Caco-2 (cell line): ENCODE measurements at regions of chr3 and their contacts with region 1.

Region 1: GRCh38 chr3:98573181-98573728 is 20.2 kb downstream of the CPOX start:
- DNase-seq: peak in 1 of 2 experiments; percentile 19
- H3K4me3 ChIP-seq: no peak overlapping the region
- H3K4me3 Mint-ChIP-seq: no peak overlapping the region
- H3K27ac Mint-ChIP-seq: no peak overlapping the region
- H3K4me1 ChIP-seq: no peaks in the 10 kb centered on the region
- H3K4me1 Mint-ChIP-seq: peaks cover 12% of the 10 kb centered on the region
- H3K27me3 ChIP-seq: no peaks in the 10 kb centered on the region
- H3K27me3 Mint-ChIP-seq: no peaks in the 10 kb centered on the region
- CTCF ChIP-seq: peak; percentile 43 to 58

Region 2: GRCh38 chr3:98039322-98040024 is 533.8 kb before region 1 on chr3:
- CTCF ChIA-PET with region 1: no interaction called
- POLR2A ChIA-PET with region 1: no interaction called
- intact Hi-C with region 1: loop called (anchors 1 kb)
- DNase-seq: peak; percentile 53 to 70
- H3K4me3 ChIP-seq: 0 out of 2 replicates have a peak overlapping the region, but pooled peaks have one; percentile 20
- H3K4me3 Mint-ChIP-seq: peak overlapping the region; percentile 72
- H3K27ac Mint-ChIP-seq: no peak overlapping the region
- H3K4me1 ChIP-seq: no peaks in the 10 kb centered on the region
- H3K4me1 Mint-ChIP-seq: no peaks in the 10 kb centered on the region
- H3K27me3 ChIP-seq: no peaks in the 10 kb centered on the region
- H3K27me3 Mint-ChIP-seq: peaks cover 3% of the 10 kb centered on the region
- CTCF ChIP-seq: peak; percentile 77 to 92

Region 3: DNA sequence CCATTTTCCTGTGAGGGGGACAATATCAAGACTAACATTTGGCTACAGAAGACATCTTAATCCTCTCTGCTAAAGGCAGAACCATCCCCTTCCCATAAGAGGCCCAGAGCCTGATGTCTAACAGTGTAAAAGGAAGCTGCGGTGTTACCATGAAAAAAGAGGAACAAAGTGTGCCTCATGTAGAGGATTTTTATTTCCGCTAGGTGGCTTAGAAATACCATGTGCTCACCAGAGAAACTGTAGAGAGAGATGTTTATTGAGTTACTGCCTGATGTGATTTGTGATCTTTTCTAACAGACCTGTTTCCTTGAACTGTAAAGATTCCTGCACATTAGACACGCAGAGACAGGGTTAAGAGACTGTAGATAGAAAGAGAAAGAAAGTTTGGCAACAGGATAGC is 384.7 kb before region 1 on chr3:
- CTCF ChIA-PET with region 1: no interaction called
- POLR2A ChIA-PET with region 1: no interaction called
- intact Hi-C with region 1: loop called (anchors 10 kb)
- DNase-seq: no peak
- H3K4me3 ChIP-seq: no peak overlapping the region
- H3K4me3 Mint-ChIP-seq: no peak overlapping the region
- H3K27ac Mint-ChIP-seq: no peak overlapping the region
- H3K4me1 ChIP-seq: no peaks in the 10 kb centered on the region
- H3K4me1 Mint-ChIP-seq: no peaks in the 10 kb centered on the region
- H3K27me3 ChIP-seq: no peaks in the 10 kb centered on the region
- H3K27me3 Mint-ChIP-seq: peaks cover 3% of the 10 kb centered on the region
- CTCF ChIP-seq: peak in 1 of 2 experiments; percentile 39

Region 4: DNA sequence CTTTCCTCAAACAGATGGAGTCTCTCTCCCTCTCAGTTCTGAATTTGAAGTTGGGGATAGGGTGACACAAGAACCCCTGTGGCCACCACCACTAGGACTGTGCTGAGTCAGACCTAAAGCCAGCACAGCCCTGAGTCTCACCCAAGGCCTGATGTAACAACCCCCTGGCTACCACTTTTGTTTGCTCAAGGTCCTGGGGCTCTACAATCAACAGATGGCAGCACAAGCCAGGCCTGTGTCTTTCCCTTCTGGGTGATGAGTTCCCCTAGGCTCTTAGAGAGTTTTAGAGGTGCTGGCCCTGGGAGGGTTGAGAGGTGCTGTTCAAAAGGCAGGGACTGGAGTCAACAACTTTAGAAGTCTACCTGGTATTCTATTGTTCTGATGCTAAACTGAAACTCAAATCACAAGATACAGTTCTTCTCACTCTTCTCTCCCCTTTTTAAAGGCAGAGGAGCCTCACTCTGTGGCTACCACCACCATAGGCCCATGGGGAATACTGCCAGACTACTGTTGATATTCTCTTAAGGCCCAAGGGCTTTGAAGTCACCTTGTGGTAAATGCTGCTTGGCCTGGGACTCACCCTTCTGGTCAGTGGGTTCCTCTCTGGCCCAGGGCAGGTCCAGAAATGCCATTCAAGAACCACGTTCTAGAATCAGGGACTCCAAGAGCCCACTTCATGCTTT is 213.1 kb before region 1 on chr3:
- CTCF ChIA-PET with region 1: no interaction called
- POLR2A ChIA-PET with region 1: no interaction called
- intact Hi-C with region 1: loop called (anchors 1 kb)
- DNase-seq: peak in 1 of 2 experiments; percentile 31
- H3K4me3 ChIP-seq: no peak overlapping the region
- H3K4me3 Mint-ChIP-seq: no peak overlapping the region
- H3K27ac Mint-ChIP-seq: no peak overlapping the region
- H3K4me1 ChIP-seq: no peaks in the 10 kb centered on the region
- H3K4me1 Mint-ChIP-seq: no peaks in the 10 kb centered on the region
- H3K27me3 ChIP-seq: no peaks in the 10 kb centered on the region
- H3K27me3 Mint-ChIP-seq: peaks cover 9% of the 10 kb centered on the region
- CTCF ChIP-seq: peak in 1 of 2 experiments; percentile 43

Region 5: GRCh38 chr3:98522244-98523090 is 50.8 kb before region 1 on chr3 and contains the start of gene CLDND1:
- CTCF ChIA-PET with region 1: no interaction called
- POLR2A ChIA-PET with region 1: no interaction called
- intact Hi-C with region 1: loop called (anchors 1 kb)
- DNase-seq: peak; percentile 95
- H3K4me3 ChIP-seq: peak within 1 kb of the TSS; percentile 64
- H3K4me3 Mint-ChIP-seq: peak within 1 kb of the TSS; percentile 84
- H3K27ac Mint-ChIP-seq: peak within 1 kb of the TSS; percentile 84
- H3K4me1 ChIP-seq: no peaks in the 10 kb centered on the region
- H3K4me1 Mint-ChIP-seq: no peaks in the 10 kb centered on the region
- H3K27me3 ChIP-seq: no peaks in the 10 kb centered on the region
- H3K27me3 Mint-ChIP-seq: no peaks in the 10 kb centered on the region
- CTCF ChIP-seq: no peak
- total RNA-seq, gene CLDND1: 56.0 TPM in 2 replicates

Region 6: GRCh38 chr3:98593046-98593936 is 20.0 kb after region 1 on chr3 and contains the start of gene CPOX:
- CTCF ChIA-PET with region 1: no interaction called
- POLR2A ChIA-PET with region 1: no interaction called
- intact Hi-C with region 1: loop called (anchors 2 kb)
- DNase-seq: peak; percentile 90 to 94
- H3K4me3 ChIP-seq: peak within 1 kb of the TSS; percentile 91
- H3K4me3 Mint-ChIP-seq: peak within 1 kb of the TSS; percentile 97
- H3K27ac Mint-ChIP-seq: peak within 1 kb of the TSS; percentile 55
- H3K4me1 ChIP-seq: peaks cover 13% of the 10 kb centered on the region
- H3K4me1 Mint-ChIP-seq: peaks cover 11% of the 10 kb centered on the region
- H3K27me3 ChIP-seq: no peaks in the 10 kb centered on the region
- H3K27me3 Mint-ChIP-seq: no peaks in the 10 kb centered on the region
- CTCF ChIP-seq: no peak
- total RNA-seq, gene CPOX: 24.2 and 25.0 TPM in 2 replicates

Region 7: DNA sequence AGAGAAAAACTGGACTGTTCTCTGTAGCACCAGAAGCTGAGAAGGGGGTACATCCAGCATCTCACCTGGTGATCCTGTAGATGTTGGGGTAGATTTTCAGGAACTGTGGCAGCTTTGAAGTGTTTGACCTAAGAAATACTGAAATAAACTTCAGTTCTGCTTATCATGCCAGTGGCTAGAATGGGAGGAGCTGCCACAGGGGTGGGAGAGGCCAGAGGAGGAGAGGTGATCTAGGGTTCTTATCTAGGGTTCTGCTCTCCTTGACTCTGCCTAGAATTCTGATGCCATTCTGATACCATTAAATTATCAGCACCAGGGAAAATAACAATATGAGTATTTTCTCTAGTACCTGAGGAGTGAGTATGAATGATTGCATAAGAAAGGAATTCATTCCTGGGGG is 30.3 kb after region 1 on chr3:
- CTCF ChIA-PET with region 1: no interaction called
- POLR2A ChIA-PET with region 1: no interaction called
- intact Hi-C with region 1: no loop called
- DNase-seq: no peak
- H3K4me3 ChIP-seq: no peak overlapping the region
- H3K4me3 Mint-ChIP-seq: no peak overlapping the region
- H3K27ac Mint-ChIP-seq: no peak overlapping the region
- H3K4me1 ChIP-seq: no peaks in the 10 kb centered on the region
- H3K4me1 Mint-ChIP-seq: no peaks in the 10 kb centered on the region
- H3K27me3 ChIP-seq: no peaks in the 10 kb centered on the region
- H3K27me3 Mint-ChIP-seq: no peaks in the 10 kb centered on the region
- CTCF ChIP-seq: no peak